CD14-positive monocyte (primary cell): ENCODE measurements at regions of chr19 and their contacts with region 1.

Region 1: GRCh38 chr19:51784922-51785690 is 9.9 kb upstream of the FPR3 start:
- DNase-seq: peak; percentile 98 to 99 (median 99)
- H3K4me3 ChIP-seq: no peak overlapping the region
- H3K4me3 Mint-ChIP-seq: no peak overlapping the region
- H3K27ac ChIP-seq: peak overlapping the region; percentile 50 to 98
- H3K27ac Mint-ChIP-seq: no peak overlapping the region
- H3K4me1 ChIP-seq: peaks cover 92 to 95% of the 10 kb centered on the region in 2 donors
- H3K4me1 Mint-ChIP-seq: peaks cover 52% of the 10 kb centered on the region
- H3K27me3 ChIP-seq: no peaks in the 10 kb centered on the region
- H3K27me3 Mint-ChIP-seq: peaks cover 0 to 1% (median 0%) of the 10 kb centered on the region in 3 donors
- CTCF ChIP-seq: no peak

Region 2: DNA sequence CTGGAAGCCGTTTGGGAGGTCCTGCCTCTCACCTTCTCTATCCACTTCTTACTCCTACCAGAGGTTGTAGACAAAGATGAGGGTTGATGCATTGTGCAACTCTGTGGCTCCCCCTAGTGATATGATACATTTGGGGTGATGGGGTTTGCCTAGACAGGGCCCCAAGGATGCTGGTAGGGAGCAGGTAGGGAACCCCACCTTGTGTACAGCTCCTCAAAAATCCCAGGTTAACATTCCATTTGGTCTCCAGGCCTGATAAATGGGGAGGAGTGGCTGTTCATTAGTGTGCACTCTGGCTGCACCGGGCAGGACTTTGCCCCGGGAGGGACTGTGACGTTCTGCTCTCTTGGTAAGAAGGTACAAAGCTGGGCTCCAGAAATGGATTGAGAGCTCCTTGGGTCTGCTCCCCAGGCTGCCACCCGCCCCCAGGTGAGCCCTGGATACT is 346.1 kb before region 1 on chr19:
- intact Hi-C with region 1: no loop called
- DNase-seq: peak; percentile 51 to 79 (median 57)
- H3K4me3 ChIP-seq: no peak overlapping the region
- H3K4me3 Mint-ChIP-seq: no peak overlapping the region
- H3K27ac ChIP-seq: no peak overlapping the region
- H3K27ac Mint-ChIP-seq: peak overlapping the region in 1 of 7 donors; percentile 72
- H3K4me1 ChIP-seq: peaks cover 26 to 38% of the 10 kb centered on the region in 2 donors
- H3K4me1 Mint-ChIP-seq: peaks cover 34% of the 10 kb centered on the region
- H3K27me3 ChIP-seq: peaks cover 20 to 36% of the 10 kb centered on the region in 2 donors
- H3K27me3 Mint-ChIP-seq: peaks cover 26 to 42% (median 35%) of the 10 kb centered on the region in 3 donors
- CTCF ChIP-seq: peak; percentile 33

Region 3: DNA sequence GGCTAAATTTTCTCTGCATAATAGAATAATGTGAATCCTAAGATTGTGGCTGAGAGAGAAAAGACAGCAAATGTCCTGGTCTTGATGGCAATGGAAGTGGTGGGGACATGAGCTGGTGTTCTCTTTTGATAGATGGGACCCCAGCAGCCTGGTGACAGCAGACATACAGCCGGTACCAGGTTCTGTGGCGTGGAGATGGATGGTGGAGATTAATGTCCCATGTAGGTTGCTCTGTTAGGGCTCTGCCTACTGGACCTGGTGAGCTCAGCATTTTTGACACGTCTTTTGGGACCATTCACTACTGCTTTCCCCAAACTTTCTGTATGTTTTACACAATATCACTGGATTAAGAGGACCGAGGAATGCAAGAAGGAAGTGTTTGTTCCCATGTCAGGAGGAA is 130.3 kb before region 1 on chr19:
- intact Hi-C with region 1: loop called in 1 of 2 experiments (anchors 5 kb)
- DNase-seq: no peak
- H3K4me3 ChIP-seq: no peak overlapping the region
- H3K4me3 Mint-ChIP-seq: no peak overlapping the region
- H3K27ac ChIP-seq: no peak overlapping the region
- H3K27ac Mint-ChIP-seq: peak overlapping the region in 1 of 7 donors; percentile 75
- H3K4me1 ChIP-seq: peaks cover 53 to 59% of the 10 kb centered on the region in 2 donors
- H3K4me1 Mint-ChIP-seq: peaks cover 58% of the 10 kb centered on the region
- H3K27me3 ChIP-seq: no peaks in the 10 kb centered on the region
- H3K27me3 Mint-ChIP-seq: peaks cover 0 to 9% (median 2%) of the 10 kb centered on the region in 3 donors
- CTCF ChIP-seq: no peak

Region 4: DNA sequence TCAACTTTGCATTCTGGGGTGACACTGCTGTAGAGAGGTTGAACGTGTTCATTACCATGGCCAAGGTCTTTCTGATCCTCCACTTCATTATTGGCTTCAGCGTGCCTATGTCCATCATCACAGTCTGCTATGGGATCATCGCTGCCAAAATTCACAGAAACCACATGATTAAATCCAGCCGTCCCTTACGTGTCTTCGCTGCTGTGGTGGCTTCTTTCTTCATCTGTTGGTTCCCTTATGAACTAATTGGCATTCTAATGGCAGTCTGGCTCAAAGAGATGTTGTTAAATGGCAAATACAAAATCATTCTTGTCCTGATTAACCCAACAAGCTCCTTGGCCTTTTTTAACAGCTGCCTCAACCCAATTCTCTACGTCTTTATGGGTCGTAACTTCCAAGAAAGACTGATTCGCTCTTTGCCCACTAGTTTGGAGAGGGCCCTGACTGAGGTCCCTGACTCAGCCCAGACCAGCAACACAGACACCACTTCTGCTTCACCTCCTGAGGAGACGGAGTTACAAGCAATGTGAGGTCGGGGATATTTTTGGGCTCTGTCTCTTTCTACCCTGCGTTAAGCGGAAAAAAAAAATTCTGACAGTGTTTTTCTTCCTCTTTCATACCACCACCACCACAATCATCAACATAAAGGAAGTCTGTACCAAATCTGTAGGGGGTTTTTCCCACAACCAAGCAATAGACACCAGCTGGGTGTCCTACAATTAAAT is 39.3 kb after region 1 on chr19:
- intact Hi-C with region 1: loop called (anchors 2 to 5 kb)
- DNase-seq: peak; percentile 91 to 96 (median 92)
- H3K4me3 ChIP-seq: peak overlapping the region in 1 of 3 experiments; percentile 41
- H3K4me3 Mint-ChIP-seq: peak overlapping the region; percentile 2 to 56
- H3K27ac ChIP-seq: peak overlapping the region; percentile 88 to 99
- H3K27ac Mint-ChIP-seq: peak overlapping the region; percentile 97 to 99 (median 98)
- H3K4me1 ChIP-seq: peaks cover 77 to 78% of the 10 kb centered on the region in 2 donors
- H3K4me1 Mint-ChIP-seq: peaks cover 80% of the 10 kb centered on the region
- H3K27me3 ChIP-seq: no peaks in the 10 kb centered on the region
- H3K27me3 Mint-ChIP-seq: peaks cover 0 to 6% (median 0%) of the 10 kb centered on the region in 3 donors
- CTCF ChIP-seq: no peak